WTC11 (cell line): ENCODE measurements at regions of chr9 and their contacts with region 1.

Region 1: GRCh38 chr9:98536542-98537173 is 172.1 kb downstream of the GABBR2 start:
- DNase-seq: peak; percentile 74
- ATAC-seq: peak; percentile 93
- H3K4me3 Mint-ChIP-seq: no peak overlapping the region
- H3K27ac Mint-ChIP-seq: no peak overlapping the region
- H3K4me1 Mint-ChIP-seq: no peaks in the 10 kb centered on the region
- H3K27me3 Mint-ChIP-seq: no peaks in the 10 kb centered on the region; the same call in none of the 2 replicates
- CTCF ChIP-seq: peak; percentile 72

Region 2: GRCh38 chr9:98399950-98400683 is 136.5 kb before region 1 on chr9:
- CTCF ChIA-PET with region 1: no interaction called
- POLR2A ChIA-PET with region 1: no interaction called
- DNase-seq: no peak
- ATAC-seq: no peak
- H3K4me3 Mint-ChIP-seq: no peak overlapping the region
- H3K27ac Mint-ChIP-seq: no peak overlapping the region
- H3K4me1 Mint-ChIP-seq: peaks cover 35% of the 10 kb centered on the region
- H3K27me3 Mint-ChIP-seq: no peaks in the 10 kb centered on the region
- CTCF ChIP-seq: no peak

Region 3: GRCh38 chr9:98410185-98410697 is 126.4 kb before region 1 on chr9:
- CTCF ChIA-PET with region 1: interaction called, 14 read pairs
- POLR2A ChIA-PET with region 1: no interaction called
- DNase-seq: peak; percentile 53
- ATAC-seq: peak; percentile 87
- H3K4me3 Mint-ChIP-seq: peak overlapping the region; percentile 47
- H3K27ac Mint-ChIP-seq: no peak overlapping the region
- H3K4me1 Mint-ChIP-seq: peaks cover 57% of the 10 kb centered on the region
- H3K27me3 Mint-ChIP-seq: no peaks in the 10 kb centered on the region; the same call in 1 of the 2 replicates
- CTCF ChIP-seq: no peak

Region 4: DNA sequence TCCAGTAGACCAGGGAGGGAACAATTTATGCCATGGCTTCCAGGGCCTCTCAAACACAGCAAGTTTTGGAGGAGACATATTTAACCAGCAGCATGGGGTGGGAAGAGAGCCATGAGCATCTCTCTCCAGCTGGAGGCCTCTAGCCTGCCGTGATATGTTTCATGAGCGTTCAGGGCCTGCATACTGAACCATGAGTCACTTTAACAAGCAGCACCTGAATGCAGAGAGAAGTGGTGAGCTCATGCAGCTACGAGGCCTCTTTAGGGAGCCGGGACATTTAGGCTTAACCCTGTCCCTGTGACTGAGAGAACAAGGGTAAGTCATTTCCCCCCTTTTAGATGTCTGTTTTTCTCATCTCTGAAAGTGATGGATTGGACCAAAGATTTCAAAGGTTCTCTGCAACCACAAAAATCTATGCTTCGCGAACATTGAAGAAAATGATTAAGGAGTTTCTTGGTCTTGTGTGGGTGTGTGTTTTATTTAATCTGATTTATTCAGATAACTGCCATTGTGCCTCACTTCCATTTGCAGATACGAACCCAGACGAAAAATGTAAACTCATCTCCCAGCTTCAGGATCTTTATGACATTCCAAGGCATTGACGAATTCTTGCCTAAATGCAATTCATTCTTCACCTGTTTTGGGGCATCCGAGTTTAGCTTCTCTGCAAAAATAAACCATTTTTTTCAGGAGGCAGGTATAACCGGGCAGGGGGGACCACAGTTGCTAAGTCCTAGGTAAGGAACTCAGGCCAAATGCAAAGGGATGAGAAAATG is 15.0 kb after region 1 on chr9:
- CTCF ChIA-PET with region 1: interaction called, 10 read pairs
- POLR2A ChIA-PET with region 1: no interaction called
- DNase-seq: no peak
- ATAC-seq: no peak
- H3K4me3 Mint-ChIP-seq: no peak overlapping the region
- H3K27ac Mint-ChIP-seq: no peak overlapping the region
- H3K4me1 Mint-ChIP-seq: peaks cover 5% of the 10 kb centered on the region; the same call in 1 of the 2 replicates
- H3K27me3 Mint-ChIP-seq: no peaks in the 10 kb centered on the region
- CTCF ChIP-seq: no peak

Region 5: DNA sequence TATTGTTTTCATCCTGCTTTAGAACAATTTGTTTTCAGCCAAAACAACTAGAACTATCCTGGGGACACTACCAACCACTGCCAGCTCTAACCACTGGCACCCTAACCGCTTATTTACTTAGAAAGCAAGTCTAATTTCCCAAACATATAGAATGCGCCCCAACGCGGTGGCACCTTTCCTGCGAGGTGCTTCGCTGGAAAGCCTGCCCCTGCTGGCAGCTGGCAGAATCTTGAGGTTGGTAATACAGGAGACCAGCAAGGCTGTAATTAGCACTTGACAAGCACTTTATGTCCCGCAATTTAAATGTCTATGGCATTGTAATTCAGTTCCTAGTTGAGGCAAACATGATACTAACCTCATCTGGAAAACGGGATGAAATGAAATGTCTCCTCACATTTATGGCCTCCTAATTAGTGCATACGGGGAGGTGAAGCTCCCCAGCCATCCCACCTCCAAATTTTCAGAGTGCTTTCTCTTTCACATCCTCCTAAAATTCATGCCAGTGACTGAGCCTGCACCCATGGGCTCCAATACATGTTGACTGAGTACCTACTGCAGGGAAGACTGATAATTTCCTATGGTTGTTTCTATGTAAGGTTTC is 141.7 kb after region 1 on chr9:
- CTCF ChIA-PET with region 1: interaction called, 11 read pairs
- POLR2A ChIA-PET with region 1: no interaction called
- DNase-seq: peak; percentile 66
- ATAC-seq: peak; percentile 94
- H3K4me3 Mint-ChIP-seq: peak overlapping the region; percentile 28; the same call in 1 of the 2 replicates
- H3K27ac Mint-ChIP-seq: no peak overlapping the region
- H3K4me1 Mint-ChIP-seq: peaks cover 26% of the 10 kb centered on the region
- H3K27me3 Mint-ChIP-seq: peaks cover 42% of the 10 kb centered on the region
- CTCF ChIP-seq: peak; percentile 26; the same call in 1 of the 2 replicates

Region 6: GRCh38 chr9:98775831-98776441 is 239.3 kb after region 1 on chr9:
- CTCF ChIA-PET with region 1: interaction called, 36 read pairs
- POLR2A ChIA-PET with region 1: no interaction called
- DNase-seq: peak; percentile 74
- ATAC-seq: peak; percentile 83
- H3K4me3 Mint-ChIP-seq: no peak overlapping the region
- H3K27ac Mint-ChIP-seq: no peak overlapping the region
- H3K4me1 Mint-ChIP-seq: peaks cover 2% of the 10 kb centered on the region; the same call in 1 of the 2 replicates
- H3K27me3 Mint-ChIP-seq: no peaks in the 10 kb centered on the region
- CTCF ChIP-seq: peak; percentile 47